ENCODE measurements at regions of chr15 and their contacts with region 1.

Region 1: DNA sequence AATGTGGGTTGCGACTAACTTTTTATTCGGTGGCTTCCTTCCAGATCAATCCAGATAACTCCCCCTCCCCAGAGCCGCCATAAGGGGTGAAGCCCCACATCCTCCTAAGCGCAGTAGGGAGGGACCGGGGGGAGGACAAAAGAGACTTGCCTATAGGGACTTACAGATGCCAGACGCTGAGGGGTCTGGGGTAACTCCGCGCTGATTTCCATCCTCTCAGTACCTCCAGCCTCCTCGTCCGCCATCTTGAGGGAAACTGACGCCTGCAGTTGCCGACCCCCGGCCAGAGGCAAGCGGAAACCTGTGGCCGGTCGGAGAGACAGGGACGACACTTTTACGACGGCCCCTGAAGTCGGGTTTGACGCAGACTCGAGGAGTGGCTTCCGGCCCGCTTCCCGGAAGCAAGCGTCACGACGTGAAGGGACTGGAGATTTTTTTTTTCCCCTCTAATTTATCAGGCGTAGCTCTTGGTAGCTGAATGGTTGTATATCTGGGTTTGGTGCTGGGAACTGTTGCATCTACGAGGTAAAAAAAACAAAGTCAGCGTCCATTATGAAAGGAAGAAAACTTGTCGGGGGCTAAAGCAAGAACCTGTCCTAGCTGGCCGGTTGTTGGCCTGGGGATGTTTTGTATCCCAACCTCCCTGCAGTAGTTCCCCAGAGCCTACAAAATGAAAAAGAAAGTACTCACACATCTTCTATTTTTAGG is at the start of gene UBR1:
- DNase-seq: peak; percentile 73 to 96 (median 82)
- ATAC-seq: peak; percentile 81
- H3K4me3 ChIP-seq: peak within 1 kb of the TSS; percentile 89
- H3K4me3 Mint-ChIP-seq: peak within 1 kb of the TSS; percentile 93
- H3K27ac ChIP-seq: peak within 1 kb of the TSS; percentile 90 to 95
- H3K27ac Mint-ChIP-seq: peak within 1 kb of the TSS; percentile 96
- H3K4me1 ChIP-seq: peaks cover 30% of the 10 kb centered on the region
- H3K4me1 Mint-ChIP-seq: peaks cover 56% of the 10 kb centered on the region
- H3K27me3 ChIP-seq: no peaks in the 10 kb centered on the region
- H3K27me3 Mint-ChIP-seq: peaks cover 5% of the 10 kb centered on the region
- CTCF ChIP-seq: no peak
- total RNA-seq, gene UBR1: 42.6 to 45.9 TPM

Region 2: DNA sequence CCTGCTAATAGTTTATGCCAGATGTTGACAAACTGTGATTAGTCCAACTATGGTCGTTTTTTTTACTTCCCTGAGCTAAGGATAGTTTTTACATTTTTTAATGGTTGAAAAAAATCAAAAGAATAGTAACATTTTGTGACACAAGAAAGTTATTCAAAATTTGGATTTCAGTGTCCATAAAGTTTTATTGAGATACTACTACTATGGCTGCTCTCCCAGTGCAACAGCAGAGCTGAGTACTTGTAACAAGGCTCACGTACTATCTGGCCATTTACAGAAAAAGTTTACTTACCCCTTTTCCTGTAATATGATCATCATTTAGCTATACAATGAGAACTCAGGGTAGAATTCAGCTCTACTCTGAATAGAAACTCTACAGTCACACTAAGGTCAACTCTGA is 15.9 kb after region 1 on chr15:
- CTCF ChIA-PET with region 1: interaction called, 5 read pairs
- POLR2A ChIA-PET with region 1: interaction called, 16 read pairs
- intact Hi-C with region 1: loop called in 1 of 2 experiments (anchors 2 kb)
- DNase-seq: no peak
- ATAC-seq: no peak
- H3K4me3 ChIP-seq: no peak overlapping the region
- H3K4me3 Mint-ChIP-seq: peak overlapping the region; percentile 32
- H3K27ac ChIP-seq: no peak overlapping the region
- H3K27ac Mint-ChIP-seq: no peak overlapping the region
- H3K4me1 ChIP-seq: peaks cover 14% of the 10 kb centered on the region
- H3K4me1 Mint-ChIP-seq: peaks cover 15% of the 10 kb centered on the region
- H3K27me3 ChIP-seq: no peaks in the 10 kb centered on the region
- H3K27me3 Mint-ChIP-seq: peaks cover 13% of the 10 kb centered on the region
- CTCF ChIP-seq: no peak

Region 3: DNA sequence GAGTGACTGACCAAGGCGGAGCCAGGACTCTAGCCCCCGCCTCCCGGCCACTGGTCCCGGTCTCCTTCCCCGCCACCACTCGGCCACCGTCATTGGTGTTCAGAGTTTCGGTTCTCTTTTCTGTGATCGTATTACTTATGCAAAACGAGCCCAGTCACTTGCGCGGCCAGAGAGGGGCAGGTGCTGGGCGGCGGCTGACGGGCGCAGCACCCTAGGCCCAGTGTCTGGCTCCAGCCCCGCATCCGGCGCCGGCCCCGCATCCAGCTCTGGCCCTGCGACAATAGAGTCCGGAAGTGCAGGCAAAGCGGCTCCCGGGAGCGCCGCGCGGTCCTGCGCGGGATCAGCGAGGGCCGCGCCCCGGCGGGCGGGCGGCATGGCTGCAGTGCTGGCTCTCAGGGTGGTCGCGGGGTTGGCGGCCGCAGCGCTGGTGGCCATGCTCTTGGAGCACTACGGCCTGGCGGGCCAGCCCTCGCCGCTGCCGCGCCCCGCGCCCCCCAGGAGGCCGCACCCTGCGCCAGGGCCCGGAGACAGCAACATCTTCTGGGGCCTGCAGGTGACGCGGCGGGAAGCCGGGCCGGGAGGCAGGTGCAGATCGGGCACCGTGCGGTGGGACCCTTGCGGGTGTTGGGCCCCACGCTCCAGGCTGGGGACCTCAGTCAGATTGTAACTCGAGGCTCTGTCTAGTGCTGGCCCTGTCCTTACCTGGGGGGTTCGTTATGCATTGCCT is 27.7 kb after region 1 on chr15 and contains the start of gene TMEM62:
- CTCF ChIA-PET with region 1: no interaction called
- POLR2A ChIA-PET with region 1: interaction called, 13 read pairs
- intact Hi-C with region 1: loop called (anchors 1 to 2 kb)
- DNase-seq: peak; percentile 26 to 79 (median 44)
- ATAC-seq: peak; percentile 79
- H3K4me3 ChIP-seq: peak within 1 kb of the TSS; percentile 65
- H3K4me3 Mint-ChIP-seq: peak within 1 kb of the TSS; percentile 90
- H3K27ac ChIP-seq: peak within 1 kb of the TSS; percentile 22 to 41
- H3K27ac Mint-ChIP-seq: peak within 1 kb of the TSS; percentile 69
- H3K4me1 ChIP-seq: peaks cover 15% of the 10 kb centered on the region
- H3K4me1 Mint-ChIP-seq: peaks cover 17% of the 10 kb centered on the region
- H3K27me3 ChIP-seq: no peaks in the 10 kb centered on the region
- H3K27me3 Mint-ChIP-seq: no peaks in the 10 kb centered on the region
- CTCF ChIP-seq: no peak
- total RNA-seq, gene TMEM62: 17.5 to 22.5 TPM

Region 4: DNA sequence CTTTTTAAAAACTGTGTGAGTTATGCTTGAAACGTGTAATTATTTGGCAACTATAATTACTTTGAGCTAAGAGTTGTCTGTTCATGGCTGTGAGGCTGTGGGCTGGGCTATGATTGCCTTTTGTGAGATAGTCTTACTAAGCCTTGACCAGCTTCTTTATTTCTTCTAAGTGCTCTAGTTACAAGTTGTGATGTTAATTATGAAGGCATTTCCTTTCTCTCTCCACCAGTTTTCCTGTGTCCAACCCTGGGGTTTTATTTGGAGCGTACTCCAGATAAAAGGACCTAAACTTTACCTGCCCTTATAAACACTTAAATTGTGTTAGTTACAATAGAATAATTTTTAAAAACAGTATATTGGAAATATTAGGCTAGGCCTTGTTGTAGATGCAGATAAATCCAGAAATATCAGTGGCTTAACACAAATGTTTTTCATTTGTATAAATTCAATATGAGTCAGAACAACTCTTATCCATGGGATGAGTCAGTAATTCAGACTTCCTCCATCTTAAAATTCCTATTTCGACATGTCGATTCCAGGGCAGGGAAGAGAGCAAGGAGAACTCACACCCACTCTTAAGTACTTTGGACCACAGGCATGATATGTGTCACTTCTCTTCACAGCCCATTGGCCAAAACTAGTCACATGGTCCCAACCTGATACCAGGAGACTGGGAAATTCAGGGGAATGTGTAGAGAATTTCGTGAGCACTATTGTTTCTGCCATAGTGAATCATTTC is 44.4 kb after region 1 on chr15:
- CTCF ChIA-PET with region 1: no interaction called
- POLR2A ChIA-PET with region 1: interaction called, 9 read pairs
- intact Hi-C with region 1: loop called in 1 of 2 experiments (anchors 5 kb)
- DNase-seq: no peak
- ATAC-seq: no peak
- H3K4me3 ChIP-seq: no peak overlapping the region
- H3K4me3 Mint-ChIP-seq: no peak overlapping the region
- H3K27ac ChIP-seq: no peak overlapping the region
- H3K27ac Mint-ChIP-seq: no peak overlapping the region
- H3K4me1 ChIP-seq: peaks cover 4% of the 10 kb centered on the region
- H3K4me1 Mint-ChIP-seq: peaks cover 15% of the 10 kb centered on the region
- H3K27me3 ChIP-seq: no peaks in the 10 kb centered on the region
- H3K27me3 Mint-ChIP-seq: no peaks in the 10 kb centered on the region
- CTCF ChIP-seq: no peak

Region 5: DNA sequence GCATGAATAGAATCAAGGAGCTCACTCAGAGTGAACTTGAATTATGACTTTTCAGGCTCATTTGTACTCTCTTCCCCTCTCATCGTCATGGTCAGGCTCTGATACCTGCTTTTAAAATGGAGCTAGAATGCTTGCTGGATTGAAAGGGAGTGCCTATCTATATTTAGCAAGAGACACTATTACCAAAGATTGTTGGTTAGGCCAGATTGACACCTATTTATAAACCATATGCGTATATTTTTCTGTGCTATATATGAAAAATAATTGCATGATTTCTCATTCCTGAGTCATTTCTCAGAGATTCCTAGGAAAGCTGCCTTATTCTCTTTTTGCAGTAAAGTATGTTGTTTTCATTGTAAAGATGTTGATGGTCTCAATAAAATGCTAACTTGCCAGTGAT is 88.9 kb after region 1 on chr15:
- CTCF ChIA-PET with region 1: no interaction called
- POLR2A ChIA-PET with region 1: no interaction called
- intact Hi-C with region 1: no loop called
- DNase-seq: no peak
- ATAC-seq: no peak
- H3K4me3 ChIP-seq: no peak overlapping the region
- H3K4me3 Mint-ChIP-seq: no peak overlapping the region
- H3K27ac ChIP-seq: no peak overlapping the region
- H3K27ac Mint-ChIP-seq: no peak overlapping the region
- H3K4me1 ChIP-seq: no peaks in the 10 kb centered on the region
- H3K4me1 Mint-ChIP-seq: peaks cover 17% of the 10 kb centered on the region
- H3K27me3 ChIP-seq: no peaks in the 10 kb centered on the region
- H3K27me3 Mint-ChIP-seq: no peaks in the 10 kb centered on the region
- CTCF ChIP-seq: no peak

Region 6: GRCh38 chr15:43253431-43254403 is 147.8 kb after region 1 on chr15:
- CTCF ChIA-PET with region 1: no interaction called
- POLR2A ChIA-PET with region 1: no interaction called
- intact Hi-C with region 1: no loop called
- DNase-seq: peak in 5 of 14 experiments; percentile 1 to 68 (median 15)
- ATAC-seq: no peak
- H3K4me3 ChIP-seq: no peak overlapping the region
- H3K4me3 Mint-ChIP-seq: no peak overlapping the region
- H3K27ac ChIP-seq: no peak overlapping the region
- H3K27ac Mint-ChIP-seq: no peak overlapping the region
- H3K4me1 ChIP-seq: peaks cover 3% of the 10 kb centered on the region
- H3K4me1 Mint-ChIP-seq: no peaks in the 10 kb centered on the region
- H3K27me3 ChIP-seq: no peaks in the 10 kb centered on the region
- H3K27me3 Mint-ChIP-seq: peaks cover 11% of the 10 kb centered on the region
- CTCF ChIP-seq: no peak

Measured in CD4-positive, alpha-beta T cell (primary cell).